Activated T-helper 1 cell treated with anti-CD3 and anti-CD28 coated beads, Interleukin-12 subunit alpha, Interleukin-12 subunit beta, Interleukin-2, Interleukin-4 antibody, amounts not matched to agents 30 ng/mL and 10 ng/mL and 1 ng/mL, durations not matched to agents 14 hours and 24 hours and 36 hours (primary cell): ENCODE measurements at regions of chr1 and their contacts with region 1.

Region 1: DNA sequence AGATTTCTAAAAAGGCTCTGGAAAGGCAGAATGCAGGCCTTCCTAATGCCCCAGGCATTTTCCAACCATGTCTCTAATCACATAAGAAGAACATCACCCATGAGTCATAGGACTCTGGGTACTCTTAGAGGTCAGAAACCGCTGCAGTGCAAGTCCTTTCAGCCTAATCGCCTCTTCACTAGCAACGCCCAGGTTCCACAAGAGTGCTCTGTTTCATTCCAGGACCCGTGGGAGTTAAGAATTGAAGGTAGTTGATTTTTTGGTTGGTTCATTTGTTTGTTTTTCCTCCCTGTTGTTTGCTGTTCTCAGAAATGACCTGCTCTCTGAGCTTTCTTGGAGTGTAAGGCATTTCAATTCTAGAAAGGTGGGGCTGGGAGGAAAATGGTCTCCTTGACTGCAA is 123.2 kb downstream of the NR5A2 start:
- DNase-seq: no peak
- H3K4me3 Mint-ChIP-seq: peak overlapping the region; percentile 20
- H3K27ac Mint-ChIP-seq: peak overlapping the region; percentile 77
- H3K4me1 Mint-ChIP-seq: peaks cover 73% of the 10 kb centered on the region
- H3K27me3 Mint-ChIP-seq: no peaks in the 10 kb centered on the region

Region 2: DNA sequence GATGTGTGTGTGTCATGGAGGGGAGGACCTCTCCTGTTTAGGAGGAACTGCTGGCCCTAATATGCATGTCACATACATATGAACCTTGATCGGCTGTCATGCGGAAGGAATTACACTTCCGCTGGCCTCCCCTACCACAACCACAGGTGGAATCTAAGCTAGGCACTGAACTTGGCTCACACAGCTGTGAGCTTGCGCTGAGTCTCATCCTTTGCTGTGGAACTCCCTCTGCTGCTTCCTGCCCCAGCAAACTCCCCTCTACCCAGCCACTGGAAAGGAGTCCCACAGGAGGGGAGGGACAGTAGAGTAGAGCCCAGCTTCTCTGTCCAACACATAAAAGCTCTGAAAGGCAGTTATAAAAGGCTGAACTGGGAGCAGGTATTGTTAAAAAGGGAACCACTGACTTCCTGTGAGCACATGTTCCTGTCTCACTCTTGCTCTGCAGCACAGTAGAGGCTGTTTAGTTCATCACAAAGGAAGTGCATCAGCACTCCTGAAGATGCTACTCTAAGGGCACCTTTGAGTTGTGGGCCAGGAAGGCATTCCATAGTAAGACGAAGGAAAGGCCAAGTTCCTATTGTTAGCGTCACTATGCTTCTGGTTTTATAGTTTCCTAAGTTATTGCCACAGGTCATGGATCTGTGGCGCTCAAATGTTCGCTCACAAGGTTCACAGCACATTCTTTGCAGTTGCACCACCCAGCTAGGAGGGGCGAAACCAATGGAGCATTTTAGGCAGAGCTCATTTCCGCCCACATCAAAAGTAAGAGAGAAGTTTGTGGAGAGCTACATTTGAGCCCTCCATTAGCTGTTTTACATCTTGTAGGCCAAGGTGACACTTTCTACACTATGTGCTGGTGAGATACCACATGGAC is 1529.5 kb before region 1 on chr1:
- intact Hi-C with region 1: loop called (anchors 5 kb)
- DNase-seq: peak; percentile 66
- H3K4me3 Mint-ChIP-seq: peak overlapping the region; percentile 84
- H3K27ac Mint-ChIP-seq: peak overlapping the region; percentile 99
- H3K4me1 Mint-ChIP-seq: peaks cover 82% of the 10 kb centered on the region
- H3K27me3 Mint-ChIP-seq: no peaks in the 10 kb centered on the region

Region 3: DNA sequence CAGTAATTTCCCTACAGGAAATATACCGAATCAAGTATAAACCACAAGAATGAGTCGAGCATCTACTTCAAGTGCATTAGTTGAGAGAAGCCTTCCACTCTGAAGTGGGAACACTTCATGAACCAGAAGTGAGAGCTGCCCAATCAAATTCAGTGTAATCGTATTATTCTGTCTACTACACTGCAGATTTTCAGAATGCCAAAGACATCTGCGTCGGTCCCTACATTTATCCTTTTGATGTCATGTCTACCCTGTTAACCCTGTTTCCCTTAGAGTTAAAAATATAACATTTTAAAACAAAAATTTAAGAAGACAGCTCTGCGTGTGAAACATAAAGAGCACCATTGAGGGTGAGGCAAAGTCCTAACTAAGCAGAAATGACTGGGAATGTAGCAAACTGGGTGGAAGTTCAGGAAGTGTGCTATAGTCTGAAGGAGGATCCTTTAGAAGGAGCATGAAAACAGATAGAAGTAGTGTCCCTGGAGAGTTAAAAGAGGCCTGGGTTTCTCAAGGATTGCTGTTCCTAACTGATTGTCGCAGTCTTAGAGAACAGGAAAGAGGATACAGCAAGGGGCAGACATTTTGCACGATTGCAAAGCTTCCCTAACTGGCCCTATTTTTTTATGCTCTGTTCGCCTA is 1220.6 kb before region 1 on chr1:
- intact Hi-C with region 1: loop called (anchors 10 kb)
- DNase-seq: no peak
- H3K4me3 Mint-ChIP-seq: peak overlapping the region; percentile 86
- H3K27ac Mint-ChIP-seq: peak overlapping the region; percentile 93
- H3K4me1 Mint-ChIP-seq: peaks cover 66% of the 10 kb centered on the region
- H3K27me3 Mint-ChIP-seq: no peaks in the 10 kb centered on the region

Region 4: GRCh38 chr1:200131616-200132015 is 19.1 kb before region 1 on chr1:
- intact Hi-C with region 1: loop called (anchors 2 kb)
- DNase-seq: no peak
- H3K4me3 Mint-ChIP-seq: no peak overlapping the region
- H3K27ac Mint-ChIP-seq: no peak overlapping the region
- H3K4me1 Mint-ChIP-seq: peaks cover 28% of the 10 kb centered on the region
- H3K27me3 Mint-ChIP-seq: peaks cover 3% of the 10 kb centered on the region

Region 5: DNA sequence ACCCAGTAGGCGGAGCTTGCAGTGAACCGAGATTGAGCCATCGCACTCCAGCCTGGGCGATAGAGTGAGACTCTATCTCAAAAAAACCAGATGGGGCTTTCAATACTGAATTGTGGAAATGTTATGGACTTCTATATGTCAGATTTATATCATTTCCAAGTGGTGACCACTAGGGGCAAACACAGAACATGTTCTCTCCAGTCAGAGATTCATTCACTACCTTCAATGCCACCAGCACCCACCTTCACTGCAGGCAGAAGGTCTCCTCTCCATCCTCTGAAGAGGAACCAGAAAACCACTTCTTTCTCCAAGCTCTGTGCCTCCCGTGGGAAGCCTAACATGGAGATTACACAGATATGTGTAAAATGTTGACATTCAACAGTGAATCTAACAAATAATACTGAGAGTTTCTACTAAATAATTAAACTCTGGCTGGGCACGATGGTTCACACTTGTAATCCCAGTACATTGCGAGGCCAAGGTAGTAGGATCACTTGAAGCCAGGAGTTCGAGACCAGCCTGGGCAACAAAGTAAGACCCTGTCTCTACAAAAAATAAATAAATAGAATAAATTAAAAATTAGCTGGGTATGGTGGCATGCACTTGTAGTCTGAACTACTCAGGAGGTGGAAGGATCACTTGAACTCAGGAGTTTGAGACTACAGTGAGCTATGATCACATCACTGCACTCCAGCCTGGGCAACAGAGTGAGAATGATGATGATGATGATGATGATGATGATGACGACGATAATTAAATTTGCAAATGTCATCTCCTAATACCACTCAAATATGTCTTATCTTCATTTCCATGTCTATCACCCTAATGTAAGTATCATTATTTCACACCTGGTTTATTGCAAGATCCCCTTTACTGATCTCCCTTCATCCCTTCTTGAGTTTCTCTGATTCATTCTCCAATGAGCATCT is 108.0 kb after region 1 on chr1:
- intact Hi-C with region 1: loop called (anchors 1 kb)
- DNase-seq: no peak
- H3K4me3 Mint-ChIP-seq: no peak overlapping the region
- H3K27ac Mint-ChIP-seq: no peak overlapping the region
- H3K4me1 Mint-ChIP-seq: peaks cover 35% of the 10 kb centered on the region
- H3K27me3 Mint-ChIP-seq: peaks cover 14% of the 10 kb centered on the region

Region 6: DNA sequence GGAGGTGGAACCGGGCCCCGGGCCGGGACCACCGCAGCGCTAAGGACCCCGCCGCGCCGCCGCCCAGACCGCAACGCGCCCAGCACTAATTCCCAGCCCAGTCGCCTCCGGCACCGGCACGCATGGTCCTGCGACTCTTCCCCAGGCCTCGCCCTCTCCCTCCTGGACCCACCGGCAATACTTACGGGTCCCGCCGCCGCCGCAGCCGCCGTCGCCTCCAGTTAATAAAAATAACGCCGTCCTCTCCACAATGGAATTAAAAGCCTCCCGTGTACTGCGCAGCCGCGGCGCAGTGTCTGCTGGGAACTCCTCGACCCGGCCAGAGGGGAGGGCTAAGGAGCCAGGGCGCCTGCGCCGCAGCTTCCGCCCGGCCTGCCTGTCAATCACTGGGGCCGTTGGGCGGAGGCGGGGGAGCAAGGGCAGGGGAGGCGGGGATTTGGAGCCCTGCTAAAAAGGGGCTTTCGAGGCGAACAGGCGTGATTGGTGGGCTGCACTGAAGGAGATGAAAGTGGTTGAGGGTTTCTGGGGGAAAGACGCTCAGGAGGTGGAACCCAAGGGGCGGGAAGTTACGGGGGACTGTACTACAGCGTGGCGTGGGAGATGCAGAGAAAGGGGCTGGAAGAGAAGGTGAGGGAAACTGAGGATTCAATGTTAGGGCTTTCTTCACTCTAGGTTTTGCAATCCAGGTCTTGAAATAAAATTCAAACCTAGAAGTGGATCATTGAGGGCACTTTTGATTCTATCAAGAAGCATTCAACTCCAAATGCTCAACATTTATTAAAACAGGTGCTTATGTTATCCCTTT is 259.2 kb after region 1 on chr1 and contains the start of gene ZNF281:
- intact Hi-C with region 1: loop called (anchors 1 kb)
- DNase-seq: peak; percentile 93
- H3K4me3 Mint-ChIP-seq: peak within 1 kb of the TSS; percentile 98
- H3K27ac Mint-ChIP-seq: peak within 1 kb of the TSS; percentile 96
- H3K4me1 Mint-ChIP-seq: peaks cover 64% of the 10 kb centered on the region
- H3K27me3 Mint-ChIP-seq: peaks cover 2% of the 10 kb centered on the region
- total RNA-seq, gene ZNF281: 23.5 and 24.1 TPM in 2 replicates

Region 7: DNA sequence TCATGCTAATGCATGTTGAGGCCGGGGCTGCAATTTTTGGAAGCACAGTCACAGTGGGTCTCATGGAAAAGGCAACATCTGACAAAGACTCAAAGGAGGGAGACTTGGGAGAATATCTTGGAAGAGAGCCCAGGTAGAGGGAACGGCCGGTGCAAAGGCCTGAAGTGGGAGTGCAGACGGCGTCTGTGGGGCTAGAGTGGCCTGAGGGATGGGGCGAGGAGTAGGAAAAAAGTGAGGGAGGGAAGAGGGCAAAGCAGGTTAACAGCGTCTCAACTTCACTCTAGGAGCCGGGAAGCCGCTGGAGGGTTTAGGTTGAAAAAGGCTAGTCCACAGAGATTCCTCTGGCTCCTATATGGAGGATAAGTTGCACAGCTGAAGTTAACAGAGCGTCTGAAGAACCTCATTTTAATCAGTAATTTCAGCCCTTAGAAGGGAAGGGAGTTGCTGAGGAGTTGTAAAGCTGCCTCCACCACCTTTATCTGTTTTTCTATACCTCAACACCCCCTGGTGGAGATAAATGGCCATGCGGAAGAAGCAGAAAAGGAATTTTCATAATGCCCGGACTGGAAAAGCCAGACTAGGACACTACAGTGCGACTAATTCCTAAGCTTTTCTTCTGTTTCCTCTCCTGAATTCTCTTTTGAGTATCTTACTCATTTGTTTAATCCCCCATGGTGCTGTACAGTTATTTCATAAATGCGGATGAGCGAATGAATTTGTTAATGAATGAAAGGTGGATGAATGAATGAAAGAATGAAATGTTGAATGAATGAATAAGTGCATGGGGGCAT is 337.9 kb after region 1 on chr1:
- intact Hi-C with region 1: loop called (anchors 1 kb)
- DNase-seq: peak; percentile 46
- H3K4me3 Mint-ChIP-seq: no peak overlapping the region
- H3K27ac Mint-ChIP-seq: no peak overlapping the region
- H3K4me1 Mint-ChIP-seq: peaks cover 24% of the 10 kb centered on the region
- H3K27me3 Mint-ChIP-seq: peaks cover 21% of the 10 kb centered on the region